OCI-LY7 (cell line): ENCODE measurements at regions of chr4 and their contacts with region 1.

Region 1: DNA sequence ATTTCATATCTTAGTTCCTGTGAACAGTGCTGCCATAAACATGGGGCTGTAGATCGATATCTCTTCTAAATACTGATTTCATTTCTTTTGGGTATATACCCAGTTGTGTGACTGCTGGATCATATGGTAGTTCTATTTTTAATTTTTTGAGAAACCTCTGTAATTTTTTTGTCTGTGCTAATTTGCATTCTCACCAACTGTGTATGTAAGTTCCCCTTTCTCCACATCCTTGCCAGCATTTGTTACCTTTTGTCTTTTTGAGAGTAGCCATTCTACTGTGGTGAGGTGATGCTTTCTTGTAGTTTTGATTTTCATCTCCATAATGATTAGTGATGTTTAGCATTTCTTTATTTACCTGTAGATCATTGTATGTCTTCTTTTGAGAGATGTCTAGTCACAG is 2086.5 kb upstream of the TENM3 start:
- DNase-seq: peak; percentile 71
- H3K4me3 ChIP-seq: peak overlapping the region; percentile 26
- H3K27ac ChIP-seq: peak overlapping the region; percentile 59
- H3K4me1 ChIP-seq: peaks cover 74% of the 10 kb centered on the region
- CTCF ChIP-seq: no peak

Region 2: GRCh38 chr4:179989975-179990374 is 166.7 kb before region 1 on chr4:
- CTCF ChIA-PET with region 1: no interaction called
- POLR2A ChIA-PET with region 1: no interaction called
- intact Hi-C with region 1: loop called (anchors 5 kb)
- DNase-seq: peak; percentile 98
- H3K4me3 ChIP-seq: peak overlapping the region; percentile 25
- H3K27ac ChIP-seq: peak overlapping the region; percentile 88
- H3K4me1 ChIP-seq: peaks cover 29% of the 10 kb centered on the region
- CTCF ChIP-seq: no peak